Right lobe of liver (tissue), 6 donors: ENCODE measurements at regions of chr2 and their contacts with region 1.

Region 1: DNA sequence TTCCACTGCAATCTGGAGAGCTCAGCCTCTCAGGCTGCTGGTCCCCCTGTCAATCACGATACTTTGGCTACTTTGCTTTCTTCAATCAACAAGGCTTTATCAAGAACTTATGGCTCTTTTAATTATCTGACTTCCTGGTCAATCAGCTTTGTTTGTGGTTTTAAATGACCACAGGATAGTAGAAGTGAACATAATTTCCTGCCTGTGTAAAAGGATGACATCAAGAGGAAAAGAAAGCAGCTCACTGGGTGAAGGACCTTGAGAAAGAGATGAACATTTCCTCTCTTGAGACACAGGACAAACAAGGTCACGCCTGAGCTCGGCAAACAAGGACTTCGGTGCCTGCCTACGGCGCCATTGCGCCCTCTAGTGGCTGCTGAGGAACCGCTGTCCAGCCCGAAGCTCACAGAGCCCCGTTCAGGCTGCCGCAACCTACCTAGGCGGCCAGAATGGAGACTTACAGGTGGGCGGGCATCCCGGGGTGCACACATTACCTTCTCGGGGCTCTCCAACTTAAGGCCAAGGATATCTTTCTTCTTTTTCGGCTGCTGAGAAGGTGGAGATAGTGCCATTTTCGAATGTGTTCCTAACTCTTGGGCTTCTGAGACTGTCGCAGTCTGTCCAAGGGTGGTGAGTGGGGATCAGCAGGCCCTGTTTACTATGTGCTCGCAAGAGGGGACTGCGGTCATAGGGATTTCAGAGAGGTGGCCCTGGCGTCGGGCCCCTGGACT is 54.0 kb downstream of the IL1RL2 start:
- DNase-seq: peak; percentile 92 to 93 (median 93)
- ATAC-seq: peak; percentile 96 to 99 (median 96)
- H3K4me3 ChIP-seq: no peak overlapping the region
- H3K27ac ChIP-seq: peak overlapping the region; percentile 51 to 63 (median 53)
- H3K4me1 ChIP-seq: peaks cover 0 to 7% (median 0%) of the 10 kb centered on the region in 4 donors
- H3K27me3 ChIP-seq: no peaks in the 10 kb centered on the region
- CTCF ChIP-seq: peak; percentile 95 to 99 (median 98)
- POLR2A ChIP-seq: no peak

Region 2: DNA sequence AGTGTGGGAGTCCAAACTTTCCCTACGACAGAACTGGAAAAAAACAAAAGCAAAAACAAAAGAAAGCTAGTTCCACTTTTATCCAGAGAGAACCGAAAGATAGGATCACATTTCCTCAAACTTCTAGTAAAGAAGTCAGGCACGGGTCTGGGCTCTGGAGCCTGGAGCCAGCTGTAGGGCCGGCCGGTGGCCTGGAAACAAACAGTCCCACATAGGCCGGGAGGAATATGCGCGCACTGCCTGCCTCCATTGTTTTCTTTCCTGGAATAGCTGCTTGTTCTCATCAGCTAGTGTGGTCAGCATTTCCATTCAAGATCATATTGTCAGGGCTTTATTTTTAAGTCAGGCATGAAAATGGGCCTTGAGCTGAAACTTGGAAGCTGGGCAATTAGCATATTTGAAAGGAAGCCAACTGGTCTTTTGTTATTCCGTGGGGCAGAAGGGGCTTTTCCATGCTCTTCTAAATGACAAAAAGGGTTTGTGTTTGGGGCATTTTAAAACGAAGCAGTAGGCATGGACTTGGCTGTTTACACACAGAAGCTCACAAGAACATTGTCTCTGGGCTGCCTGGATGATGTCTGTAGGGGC is 707.1 kb before region 1 on chr2:
- intact Hi-C with region 1: no loop called
- DNase-seq: no peak
- ATAC-seq: peak; percentile 25 to 57 (median 48)
- H3K4me3 ChIP-seq: no peak overlapping the region
- H3K27ac ChIP-seq: no peak overlapping the region
- H3K4me1 ChIP-seq: no peaks in the 10 kb centered on the region
- H3K27me3 ChIP-seq: no peaks in the 10 kb centered on the region
- CTCF ChIP-seq: no peak
- POLR2A ChIP-seq: no peak

Region 3: GRCh38 chr2:102010902-102011301 is 229.9 kb before region 1 on chr2:
- intact Hi-C with region 1: loop called (anchors 10 kb)
- DNase-seq: no peak
- ATAC-seq: peak in 2 of 4 donors; percentile 28 to 29
- H3K4me3 ChIP-seq: no peak overlapping the region
- H3K27ac ChIP-seq: no peak overlapping the region
- H3K4me1 ChIP-seq: peaks cover 0 to 7% (median 3%) of the 10 kb centered on the region in 4 donors
- H3K27me3 ChIP-seq: no peaks in the 10 kb centered on the region
- CTCF ChIP-seq: no peak
- POLR2A ChIP-seq: no peak

Region 4: GRCh38 chr2:102050854-102051391 is 189.9 kb before region 1 on chr2:
- intact Hi-C with region 1: no loop called
- DNase-seq: peak in 2 of 3 donors; percentile 75 to 79
- ATAC-seq: peak; percentile 28 to 57 (median 44)
- H3K4me3 ChIP-seq: no peak overlapping the region
- H3K27ac ChIP-seq: peak overlapping the region; percentile 49 to 77 (median 66)
- H3K4me1 ChIP-seq: peaks cover 1 to 47% (median 12%) of the 10 kb centered on the region in 4 donors
- H3K27me3 ChIP-seq: no peaks in the 10 kb centered on the region
- CTCF ChIP-seq: no peak
- POLR2A ChIP-seq: no peak

Region 5: DNA sequence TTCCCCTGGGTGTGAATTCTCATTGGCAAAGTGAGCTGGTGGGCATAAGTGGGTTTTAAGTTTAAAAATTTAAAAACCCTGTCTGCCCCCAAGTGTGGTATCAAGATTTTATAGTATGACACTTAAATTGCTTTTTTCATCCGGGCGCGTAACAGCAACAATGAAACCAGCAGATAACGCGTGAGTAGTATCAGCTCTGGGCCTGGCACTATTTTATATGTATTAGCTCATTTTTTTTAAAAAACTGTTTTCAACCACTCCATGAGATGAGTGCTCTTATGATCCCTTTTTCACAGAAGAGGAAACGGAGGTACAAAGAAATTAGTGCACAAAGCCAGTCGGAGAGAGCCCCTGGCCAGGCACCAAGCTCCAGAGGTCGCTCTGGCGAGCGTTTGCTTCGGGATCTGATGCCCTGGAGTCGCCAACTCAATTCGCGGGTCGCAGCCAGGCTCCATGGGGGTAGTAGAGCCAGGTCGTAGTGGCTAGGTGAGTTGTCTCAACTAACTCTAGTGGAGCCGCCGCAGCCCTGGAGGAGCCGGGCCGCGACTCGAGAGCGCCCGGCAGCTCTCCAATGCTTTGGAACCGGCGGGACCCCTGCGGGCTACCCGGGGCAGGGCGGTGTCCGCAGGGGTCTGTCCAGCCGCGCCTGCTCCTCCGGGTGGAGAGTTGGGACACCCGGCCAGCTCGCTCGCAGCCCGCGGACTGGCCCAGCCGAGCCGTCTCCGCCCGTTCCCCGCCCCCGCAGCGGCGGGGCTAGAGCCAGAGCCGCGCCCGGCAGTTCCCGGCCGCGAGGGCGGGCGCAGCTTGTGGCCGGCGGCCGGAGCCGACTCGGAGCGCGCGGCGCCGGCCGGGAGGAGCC is 98.6 kb before region 1 on chr2 and contains the start of gene IL1R1:
- intact Hi-C with region 1: no loop called
- DNase-seq: peak; percentile 90 to 92 (median 91)
- ATAC-seq: peak; percentile 82 to 94 (median 92)
- H3K4me3 ChIP-seq: peak within 1 kb of the TSS; percentile 60 to 73 (median 60)
- H3K27ac ChIP-seq: peak within 1 kb of the TSS; percentile 86 to 89 (median 87)
- H3K4me1 ChIP-seq: peaks cover 0 to 10% (median 3%) of the 10 kb centered on the region in 4 donors
- H3K27me3 ChIP-seq: no peaks in the 10 kb centered on the region
- CTCF ChIP-seq: peak in 1 of 4 donors; percentile 8
- POLR2A ChIP-seq: peak; percentile 87
- total RNA-seq, gene IL1R1: 40.8 to 67.6 (median 52.2) TPM

Region 6: GRCh38 chr2:102442967-102443828 is 202.4 kb after region 1 on chr2:
- intact Hi-C with region 1: loop called in 1 of 2 experiments (anchors 10 kb)
- DNase-seq: no peak
- ATAC-seq: peak; percentile 76 to 84 (median 80)
- H3K4me3 ChIP-seq: no peak overlapping the region
- H3K27ac ChIP-seq: no peak overlapping the region
- H3K4me1 ChIP-seq: no peaks in the 10 kb centered on the region
- H3K27me3 ChIP-seq: no peaks in the 10 kb centered on the region
- CTCF ChIP-seq: peak; percentile 71 to 78 (median 75)
- POLR2A ChIP-seq: no peak

Region 7: GRCh38 chr2:102478686-102479470 is 238.1 kb after region 1 on chr2:
- intact Hi-C with region 1: no loop called
- DNase-seq: no peak
- ATAC-seq: no peak
- H3K4me3 ChIP-seq: no peak overlapping the region
- H3K27ac ChIP-seq: no peak overlapping the region
- H3K4me1 ChIP-seq: no peaks in the 10 kb centered on the region
- H3K27me3 ChIP-seq: no peaks in the 10 kb centered on the region
- CTCF ChIP-seq: no peak
- POLR2A ChIP-seq: no peak